ENCODE measurements at regions of chr2 and their contacts with region 1.

Region 1: GRCh38 chr2:209334198-209335017 is 89.4 kb upstream of the MAP2 start:
- DNase-seq: no peak
- ATAC-seq: no peak

Region 2: GRCh38 chr2:209162129-209162528 is 172.3 kb before region 1 on chr2:
- intact Hi-C with region 1: no loop called
- DNase-seq: no peak
- ATAC-seq: no peak

Region 3: DNA sequence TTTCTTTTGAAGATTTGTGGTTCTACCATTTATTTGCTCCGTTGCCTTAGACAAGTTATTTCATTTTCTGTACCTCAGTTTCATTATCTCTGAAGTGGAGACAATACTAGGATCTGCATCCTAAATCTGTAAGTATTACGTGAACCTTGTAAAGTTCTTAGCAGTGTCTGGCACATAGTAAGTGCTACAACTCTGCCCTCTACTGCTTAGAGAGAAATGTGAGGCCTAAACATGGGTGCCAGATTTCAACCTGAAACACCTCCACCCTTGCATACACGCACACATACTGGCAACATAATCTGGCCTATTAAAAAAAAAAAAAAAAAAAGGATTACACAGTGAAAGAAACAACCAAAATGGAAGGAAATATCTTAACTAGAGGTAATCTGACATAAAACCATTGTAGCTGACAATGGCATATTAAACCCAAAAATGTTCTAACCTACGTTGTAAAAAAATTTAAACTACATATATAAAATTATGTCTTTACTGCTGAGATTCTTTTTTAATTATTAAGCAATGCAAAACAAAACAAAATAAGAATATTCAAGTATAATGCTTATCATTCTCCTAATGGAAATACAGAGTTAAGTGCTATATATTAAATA is 222.1 kb after region 1 on chr2:
- intact Hi-C with region 1: loop called (anchors 5 kb)
- DNase-seq: no peak
- ATAC-seq: no peak

Region 4: GRCh38 chr2:209696836-209697711 is 362.7 kb after region 1 on chr2:
- intact Hi-C with region 1: no loop called
- DNase-seq: no peak
- ATAC-seq: no peak

Region 5: DNA sequence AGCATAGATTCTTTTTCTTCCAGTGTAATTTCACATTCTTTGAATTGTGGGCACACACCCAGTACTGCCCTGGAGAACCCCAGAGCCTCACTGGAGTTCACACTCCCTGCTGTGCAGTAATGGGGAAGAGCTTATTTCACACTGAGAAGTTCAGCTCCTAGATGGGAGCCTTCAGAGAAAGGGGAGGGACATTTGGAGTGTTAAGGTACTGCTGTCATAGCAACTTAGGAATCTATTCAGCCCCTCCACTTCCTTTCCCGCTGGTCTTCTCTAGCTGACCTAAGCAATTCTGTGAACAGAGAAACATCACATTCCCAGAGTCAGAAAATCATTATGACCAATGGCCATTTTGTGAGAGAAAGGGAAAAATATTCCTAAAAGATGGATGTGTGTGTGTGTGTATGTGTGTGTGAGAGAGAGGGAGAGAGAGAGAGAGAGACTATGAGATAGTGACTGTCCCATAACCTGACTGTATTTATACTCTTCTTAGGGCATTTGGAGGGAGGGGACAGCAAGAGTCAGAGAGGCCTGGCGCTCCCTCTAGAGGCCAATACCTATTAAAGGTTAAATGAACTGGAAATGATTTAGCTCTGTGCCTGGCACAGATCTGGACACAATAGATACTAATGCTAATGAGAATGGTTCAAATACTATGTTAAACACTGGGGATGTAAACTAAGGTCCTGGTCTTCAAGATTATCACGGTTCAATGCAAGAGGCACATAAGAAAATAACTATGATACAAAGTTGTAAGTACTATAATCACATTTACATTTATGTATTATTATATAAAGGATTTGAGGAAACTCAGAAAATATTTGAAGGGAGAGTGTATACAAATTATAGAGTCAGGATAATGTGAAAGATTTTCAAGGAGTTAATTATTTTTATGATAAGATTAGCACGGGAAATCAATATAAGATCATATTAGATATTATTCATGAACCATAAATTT is 626.5 kb after region 1 on chr2:
- intact Hi-C with region 1: loop called (anchors 5 kb)
- DNase-seq: no peak
- ATAC-seq: peak; percentile 65

Measured in Right ventricle myocardium inferior (tissue), 1 donor.